ENCODE measurements at regions of chr7 and their contacts with region 1.

Region 1: GRCh38 chr7:22822486-22823141 is at the start of gene TOMM7:
- DNase-seq: peak; percentile 93
- ATAC-seq: peak; percentile 98
- total RNA-seq, gene TOMM7: 650 TPM

Region 2: DNA sequence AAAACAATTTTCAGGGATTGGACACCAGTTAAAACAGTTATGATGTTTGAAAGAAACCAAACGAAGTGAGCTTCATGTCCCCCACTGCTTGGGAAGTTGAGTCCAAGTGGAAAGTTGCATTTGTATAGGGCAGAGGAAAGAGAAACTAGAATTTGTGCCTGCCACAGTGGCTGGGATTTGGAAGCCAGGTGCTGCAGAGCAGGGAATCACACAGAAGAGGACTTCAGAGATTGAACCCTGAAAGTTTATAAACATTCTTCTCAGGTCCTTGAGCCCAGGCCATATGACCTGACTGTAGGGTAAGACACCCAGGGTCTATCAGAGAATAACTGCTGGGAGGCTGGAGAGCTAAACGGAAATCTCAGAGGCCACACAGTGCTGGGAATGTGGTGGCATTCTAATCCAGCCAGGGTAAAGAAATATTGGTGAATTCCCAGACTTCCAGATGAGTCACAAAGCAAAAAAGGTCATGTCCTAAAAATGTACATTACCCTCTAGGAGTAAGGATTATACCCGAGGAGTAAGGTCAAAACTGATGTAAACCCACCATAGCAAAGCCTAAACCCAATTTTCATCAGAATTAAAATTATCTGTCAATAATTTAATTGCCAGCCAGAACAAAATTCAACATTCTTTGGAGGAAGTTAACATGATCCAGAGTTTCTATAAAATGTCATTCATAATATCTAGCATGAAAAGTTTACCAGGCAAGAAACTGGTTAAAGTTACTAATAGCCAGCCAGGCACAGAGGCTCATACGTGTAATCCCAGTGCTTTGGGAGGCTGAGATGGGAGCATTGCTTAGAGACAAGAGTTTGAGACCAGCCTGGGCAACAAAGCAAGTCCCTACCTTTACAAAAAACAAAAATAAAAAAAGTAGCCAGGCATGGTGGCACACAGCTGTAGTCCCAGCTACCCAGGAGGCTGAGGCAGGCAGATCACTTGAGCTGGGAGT is 31.1 kb before region 1 on chr7:
- intact Hi-C with region 1: no loop called
- DNase-seq: no peak
- ATAC-seq: no peak

Region 3: DNA sequence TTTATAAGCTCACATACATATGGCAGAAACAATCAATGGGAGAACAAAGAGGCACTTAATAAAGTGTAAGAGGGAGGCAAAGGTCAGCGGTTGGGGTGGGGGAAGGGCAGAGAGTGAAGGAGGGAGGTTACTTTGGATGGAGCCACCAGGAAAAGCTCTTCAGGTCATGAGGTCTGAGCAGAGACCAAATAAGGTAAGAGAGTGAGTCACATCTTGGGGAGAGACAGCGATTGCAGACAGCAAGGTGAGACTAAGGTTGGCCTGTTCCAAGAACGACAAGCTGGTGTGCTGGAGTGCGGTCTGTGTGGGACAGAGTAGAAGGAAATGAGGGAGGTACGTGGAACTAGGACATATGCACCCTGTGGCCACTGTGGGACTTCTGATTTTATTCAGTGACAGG is 74.3 kb after region 1 on chr7:
- intact Hi-C with region 1: no loop called
- DNase-seq: no peak
- ATAC-seq: no peak

Region 4: DNA sequence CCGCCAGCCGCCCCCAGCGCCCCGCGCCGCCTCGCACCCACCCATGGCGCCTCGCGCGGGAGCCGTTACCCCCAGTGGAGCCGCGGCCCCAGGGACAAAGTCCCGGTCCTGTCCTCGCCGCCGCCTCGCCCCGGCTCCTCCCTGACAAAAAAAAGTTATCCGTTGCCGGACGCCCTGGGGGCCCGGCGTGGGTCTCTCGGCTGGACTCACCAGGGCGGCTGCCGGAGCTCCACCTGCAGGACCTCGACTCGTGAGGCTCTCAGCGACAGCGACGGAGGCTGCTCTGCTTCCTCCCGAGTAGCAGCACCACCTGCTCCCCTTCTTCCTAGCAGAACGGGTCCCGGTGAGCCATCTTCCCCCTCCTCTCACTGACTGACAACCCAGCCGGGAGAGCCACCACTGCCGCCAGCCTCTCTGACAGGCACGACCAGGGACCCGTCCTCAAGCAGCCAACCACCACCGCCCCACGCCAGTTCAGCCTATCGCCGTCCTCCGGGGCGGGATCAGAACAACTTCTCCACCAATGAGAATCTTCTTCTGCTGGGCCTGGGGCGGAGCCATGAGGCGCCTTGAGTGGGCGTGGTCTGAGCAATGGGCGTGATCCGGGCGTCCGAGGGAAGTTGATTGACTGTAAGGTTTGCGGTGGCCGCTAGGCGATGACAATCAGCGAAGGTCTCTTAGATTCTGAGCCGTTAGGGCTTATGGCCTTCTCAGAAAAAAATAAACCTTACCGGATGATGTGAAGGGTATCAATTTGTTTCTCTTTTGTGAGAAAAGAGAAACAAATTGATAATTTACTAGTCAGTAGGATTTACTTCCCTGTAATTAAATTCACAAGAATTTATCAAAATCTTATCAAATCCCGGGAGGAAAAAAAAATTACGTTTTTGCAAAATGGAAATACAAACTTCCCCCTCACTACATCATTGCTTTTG is 191.4 kb after region 1 on chr7 and contains the start of gene HYCC1:
- intact Hi-C with region 1: loop called (anchors 5 kb)
- DNase-seq: peak; percentile 99
- ATAC-seq: peak; percentile 100
- total RNA-seq, gene HYCC1: 40.8 TPM

Region 5: GRCh38 chr7:23055582-23056178 is 233.1 kb after region 1 on chr7:
- intact Hi-C with region 1: loop called (anchors 5 kb)
- DNase-seq: no peak
- ATAC-seq: peak; percentile 67

Region 6: DNA sequence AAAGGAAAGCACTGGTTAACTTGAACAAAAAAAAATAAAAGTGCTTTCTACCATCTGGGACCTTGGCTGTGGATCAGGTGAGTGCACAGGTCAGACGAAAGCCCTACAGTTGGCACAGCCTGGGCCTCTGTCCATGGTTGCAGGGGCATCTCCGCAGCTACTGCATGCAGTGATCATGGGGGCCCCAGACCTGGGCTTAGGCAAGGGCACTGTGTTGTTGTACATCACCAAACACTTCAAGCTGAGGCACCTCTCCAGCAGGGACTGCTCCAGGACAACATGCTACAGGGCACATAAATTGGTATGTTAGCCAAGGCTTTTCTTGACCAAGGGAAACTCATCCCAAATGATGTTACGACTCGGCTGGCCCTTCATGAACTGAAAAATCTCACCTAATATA is 306.4 kb after region 1 on chr7:
- intact Hi-C with region 1: no loop called
- DNase-seq: no peak
- ATAC-seq: peak; percentile 93